ENCODE measurements at regions of chr4 and their contacts with region 1.

Region 1: DNA sequence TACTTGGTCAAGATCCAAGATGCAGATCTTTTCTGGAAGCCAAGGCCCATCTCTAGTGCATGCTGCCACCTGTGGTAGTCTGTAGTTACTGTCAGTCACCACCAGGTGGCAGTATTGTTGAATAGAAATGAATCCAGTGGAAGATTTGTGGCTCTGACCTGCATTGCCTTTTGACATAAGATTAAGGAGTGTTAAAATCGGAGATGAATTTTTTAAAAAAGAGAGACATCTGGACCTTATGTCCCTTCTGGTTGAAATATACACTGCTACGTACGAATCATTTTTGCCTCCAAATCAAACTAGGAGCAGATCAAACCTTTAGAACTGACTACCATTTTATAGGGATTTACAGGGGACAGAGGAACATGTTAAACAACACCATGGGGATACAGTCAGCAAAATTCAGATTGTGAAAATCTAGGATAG is 46.9 kb upstream of the RHOH start:
- DNase-seq: peak; percentile 69
- CTCF ChIP-seq: peak; percentile 81

Region 2: GRCh38 chr4:40316782-40317635 is 167.0 kb after region 1 on chr4:
- in situ Hi-C with region 1: loop called (anchors 10 kb)
- DNase-seq: peak; percentile 58
- CTCF ChIP-seq: peak; percentile 75

Region 3: DNA sequence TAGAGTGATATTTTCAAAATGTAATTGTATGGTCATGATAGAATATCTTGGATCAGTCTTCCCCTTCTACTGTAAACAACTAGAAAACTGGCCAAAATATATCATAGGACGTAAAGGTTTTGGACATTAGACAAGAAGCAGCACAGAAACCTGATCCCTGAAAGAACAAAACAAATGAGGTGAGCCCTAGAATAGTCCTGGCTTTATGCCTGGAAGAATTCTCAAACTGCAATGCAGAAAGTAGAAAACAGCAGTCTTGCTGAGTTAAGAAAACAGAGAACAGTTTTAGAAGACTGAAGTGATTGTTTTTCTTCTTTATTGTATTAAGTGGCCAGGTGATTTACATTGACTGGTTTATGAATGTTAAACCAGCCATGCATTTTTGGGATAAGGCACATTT is 619.3 kb after region 1 on chr4:
- in situ Hi-C with region 1: no loop called
- DNase-seq: no peak
- CTCF ChIP-seq: no peak